ENCODE measurements at regions of chr1 and their contacts with region 1.

Region 1: GRCh38 chr1:243255791-243256512 is at the start of gene SDCCAG8:
- DNase-seq: peak; percentile 96 to 98
- H3K4me3 ChIP-seq: peak within 1 kb of the TSS; percentile 76
- H3K27ac ChIP-seq: peak within 1 kb of the TSS; percentile 45
- H3K4me1 ChIP-seq: peaks cover 37% of the 10 kb centered on the region
- H3K27me3 ChIP-seq: no peaks in the 10 kb centered on the region
- CTCF ChIP-seq: no peak
- total RNA-seq, gene SDCCAG8: 20.7 and 22.7 TPM in 2 replicates

Region 2: DNA sequence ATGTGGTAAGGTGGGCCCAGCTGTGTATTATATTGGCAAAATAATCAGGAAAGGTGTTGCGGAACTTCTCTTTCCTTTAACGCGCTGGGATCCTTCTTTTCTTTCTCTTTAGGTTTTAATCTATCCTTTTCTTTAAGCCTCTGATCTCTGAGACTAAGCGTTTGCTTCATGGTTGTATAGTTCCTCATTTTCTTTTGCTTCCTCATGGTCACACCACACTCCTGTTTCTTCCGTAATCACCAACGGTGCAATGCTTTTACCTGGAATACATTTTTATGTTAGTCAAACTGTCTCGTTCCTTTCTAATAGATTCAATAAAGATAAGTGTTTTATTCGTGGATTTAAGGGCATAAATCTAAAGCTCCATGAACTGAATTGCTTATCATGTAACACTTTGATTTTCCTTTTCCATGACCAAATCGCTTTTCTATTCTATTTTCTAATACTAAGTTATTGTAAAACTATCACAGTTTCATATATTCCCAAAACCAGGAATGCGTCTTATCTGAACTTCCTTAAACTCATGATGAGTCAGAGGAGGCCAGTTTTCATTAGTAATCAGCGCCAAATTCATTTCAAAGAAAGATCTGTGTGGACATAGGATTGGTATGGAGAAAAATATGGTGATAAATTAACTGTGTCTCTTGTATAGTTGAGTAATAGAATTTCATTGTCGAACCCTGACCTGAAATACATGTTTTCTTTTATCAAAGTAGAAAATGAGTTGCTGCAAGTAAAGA is 12.1 kb after region 1 on chr1:
- CTCF ChIA-PET with region 1: no interaction called
- POLR2A ChIA-PET with region 1: interaction called, 3 read pairs
- intact Hi-C with region 1: loop called (anchors 1 kb)
- DNase-seq: peak in 1 of 2 experiments; percentile 89
- H3K4me3 ChIP-seq: peak overlapping the region; percentile 35; the same call in 1 of the 2 replicates
- H3K27ac ChIP-seq: peak overlapping the region; percentile 88
- H3K4me1 ChIP-seq: peaks cover 36% of the 10 kb centered on the region
- H3K27me3 ChIP-seq: no peaks in the 10 kb centered on the region
- CTCF ChIP-seq: no peak

Region 3: DNA sequence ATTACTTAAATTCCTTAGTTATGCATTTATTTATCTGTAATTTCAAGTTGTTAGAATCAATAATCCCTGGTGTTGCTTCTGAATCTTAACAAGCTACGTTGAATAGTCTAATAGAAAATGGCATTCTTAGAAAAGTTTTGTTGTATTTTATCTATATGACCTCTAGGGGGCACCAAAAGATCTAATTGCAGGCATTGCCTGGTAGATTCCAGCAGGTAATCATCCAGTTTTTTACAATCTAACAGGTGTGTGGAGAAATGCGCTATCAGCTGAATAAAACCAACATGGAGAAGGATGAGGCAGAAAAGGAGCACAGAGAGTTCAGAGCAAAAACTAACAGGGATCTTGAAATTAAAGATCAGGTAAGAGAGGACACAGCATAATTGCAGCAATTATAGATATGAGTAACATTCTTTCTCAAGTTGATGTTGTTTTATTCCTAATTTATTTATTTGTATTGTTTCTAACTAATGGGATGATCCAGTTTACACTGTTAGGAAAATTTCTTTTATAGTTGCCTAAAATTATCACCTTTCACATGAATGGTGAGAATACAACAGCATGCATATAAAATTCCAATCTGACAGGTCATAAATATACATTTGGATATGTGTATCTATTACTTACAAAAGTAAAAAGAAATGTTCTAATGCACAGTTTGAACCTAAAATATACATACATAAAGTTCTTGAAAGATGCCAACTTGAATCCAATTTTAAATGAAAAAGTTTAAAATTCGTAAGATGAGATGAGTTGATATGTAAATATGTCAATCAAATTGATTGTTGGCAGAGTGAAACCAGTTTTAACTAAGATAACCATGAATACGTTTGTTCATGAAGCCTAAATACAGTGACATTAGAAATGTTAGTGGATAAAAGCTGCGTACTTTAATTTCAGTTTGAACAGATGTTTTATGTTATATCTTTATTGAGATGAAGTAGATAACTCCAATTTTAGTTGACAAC is 88.3 kb after region 1 on chr1:
- CTCF ChIA-PET with region 1: no interaction called
- POLR2A ChIA-PET with region 1: no interaction called
- intact Hi-C with region 1: no loop called
- DNase-seq: peak in 1 of 2 experiments; percentile 48
- H3K4me3 ChIP-seq: no peak overlapping the region
- H3K27ac ChIP-seq: no peak overlapping the region
- H3K4me1 ChIP-seq: no peaks in the 10 kb centered on the region
- H3K27me3 ChIP-seq: no peaks in the 10 kb centered on the region
- CTCF ChIP-seq: peak; percentile 87

Region 4: DNA sequence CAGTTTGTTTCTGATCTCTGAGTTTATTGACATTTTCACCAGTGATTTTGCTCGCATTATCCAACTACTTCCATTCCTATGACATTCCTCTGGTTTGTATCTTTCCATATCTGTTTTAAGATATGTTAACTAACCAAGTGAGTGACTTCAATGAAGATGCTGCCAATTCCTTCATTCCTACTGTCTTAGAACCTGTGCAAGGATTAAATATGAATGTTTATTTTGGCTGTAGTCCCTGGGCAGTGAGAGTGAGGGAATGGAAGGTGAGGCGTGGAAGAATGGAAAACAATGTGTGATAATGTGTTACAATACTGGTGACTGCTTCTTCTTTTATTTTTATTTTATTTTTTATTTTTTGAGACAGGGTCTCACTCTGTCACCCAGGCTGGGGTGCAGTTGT is 182.9 kb after region 1 on chr1:
- CTCF ChIA-PET with region 1: no interaction called
- POLR2A ChIA-PET with region 1: no interaction called
- intact Hi-C with region 1: no loop called
- DNase-seq: no peak
- H3K4me3 ChIP-seq: no peak overlapping the region
- H3K27ac ChIP-seq: no peak overlapping the region
- H3K4me1 ChIP-seq: no peaks in the 10 kb centered on the region
- H3K27me3 ChIP-seq: no peaks in the 10 kb centered on the region
- CTCF ChIP-seq: no peak

Measured in PC-9 (cell line).